Left ventricle myocardium inferior (tissue), 1 donor: ENCODE measurements at regions of chr12 and their contacts with region 1.

Region 1: GRCh38 chr12:26097046-26097878 is 27.6 kb downstream of the BHLHE41 start:
- DNase-seq: peak; percentile 55
- H3K4me3 ChIP-seq: no peak overlapping the region
- H3K27ac ChIP-seq: no peak overlapping the region
- H3K4me1 ChIP-seq: no peaks in the 10 kb centered on the region
- H3K27me3 ChIP-seq: no peaks in the 10 kb centered on the region
- CTCF ChIP-seq: peak; percentile 98

Region 2: GRCh38 chr12:26651566-26652188 is 554.4 kb after region 1 on chr12:
- intact Hi-C with region 1: loop called (anchors 5 kb)
- DNase-seq: no peak
- H3K4me3 ChIP-seq: no peak overlapping the region
- H3K27ac ChIP-seq: no peak overlapping the region
- H3K4me1 ChIP-seq: peaks cover 3% of the 10 kb centered on the region
- H3K27me3 ChIP-seq: no peaks in the 10 kb centered on the region
- CTCF ChIP-seq: peak; percentile 87